Body of pancreas (tissue), 4 donors: ENCODE measurements at regions of chr1 and their contacts with region 1.

Region 1: DNA sequence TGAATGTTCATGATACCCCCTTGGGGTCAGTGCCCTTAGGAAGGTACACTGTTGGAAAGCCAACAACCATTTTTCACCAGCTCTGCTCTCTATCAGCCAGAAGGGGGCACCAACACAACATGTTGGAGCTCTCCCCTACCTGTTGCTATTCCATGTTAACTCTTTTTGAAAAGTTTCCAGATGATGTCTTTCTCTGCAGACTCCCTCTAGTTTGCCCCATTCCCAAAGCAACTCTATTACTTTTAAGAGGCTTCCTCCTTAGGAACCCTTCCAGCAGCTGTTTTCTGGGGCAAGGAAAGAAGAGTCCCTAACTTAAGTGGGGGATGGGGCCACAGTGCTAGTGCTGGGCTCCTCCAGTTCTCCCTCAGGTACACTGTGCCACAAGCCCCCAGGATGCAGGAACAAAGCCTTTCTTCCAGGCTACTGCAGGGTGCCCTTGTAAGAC is 22.9 kb upstream of the NDC1 start:
- DNase-seq: peak; percentile 30 to 54 (median 49)
- ATAC-seq: peak; percentile 66
- H3K4me3 ChIP-seq: no peak overlapping the region
- H3K27ac ChIP-seq: no peak overlapping the region
- H3K4me1 ChIP-seq: no peaks in the 10 kb centered on the region
- H3K27me3 ChIP-seq: no peaks in the 10 kb centered on the region
- CTCF ChIP-seq: peak; percentile 17 to 76 (median 68)
- POLR2A ChIP-seq: no peak

Region 2: GRCh38 chr1:53959664-53960250 is 98.8 kb after region 1 on chr1:
- intact Hi-C with region 1: loop called (anchors 10 kb)
- DNase-seq: no peak
- ATAC-seq: peak; percentile 42
- H3K4me3 ChIP-seq: no peak overlapping the region
- H3K27ac ChIP-seq: no peak overlapping the region
- H3K4me1 ChIP-seq: peaks cover 14% of the 10 kb centered on the region
- H3K27me3 ChIP-seq: no peaks in the 10 kb centered on the region
- CTCF ChIP-seq: peak; percentile 19 to 83 (median 69)
- POLR2A ChIP-seq: no peak